ENCODE measurements at regions of chr4 and their contacts with region 1.

Region 1: GRCh38 chr4:6986781-6987587 is 56.2 kb upstream of the TADA2B start:
- DNase-seq: peak; percentile 90
- ATAC-seq: peak; percentile 93
- H3K4me3 ChIP-seq: peak overlapping the region; percentile 95
- H3K27ac ChIP-seq: peak overlapping the region; percentile 87
- H3K4me1 ChIP-seq: peaks cover 14% of the 10 kb centered on the region
- H3K27me3 ChIP-seq: no peaks in the 10 kb centered on the region
- CTCF ChIP-seq: 0 out of 2 replicates have a peak, but pooled peaks have one; percentile 4
- POLR2A ChIP-seq: no peak; the same call in 1 of the 2 replicates
- RAD21 ChIP-seq: no peak

Region 2: GRCh38 chr4:6192245-6192644 is 794.7 kb before region 1 on chr4:
- CTCF ChIA-PET with region 1: no interaction called
- POLR2A ChIA-PET with region 1: no interaction called
- dilution Hi-C with region 1: no loop called
- in situ Hi-C with region 1: no loop called
- intact Hi-C with region 1: no loop called
- DNase-seq: no peak
- ATAC-seq: no peak
- H3K4me3 ChIP-seq: no peak overlapping the region
- H3K27ac ChIP-seq: no peak overlapping the region
- H3K4me1 ChIP-seq: no peaks in the 10 kb centered on the region
- H3K27me3 ChIP-seq: peaks cover 8% of the 10 kb centered on the region; the same call in 1 of the 2 replicates
- CTCF ChIP-seq: no peak
- POLR2A ChIP-seq: no peak
- RAD21 ChIP-seq: no peak

Region 3: DNA sequence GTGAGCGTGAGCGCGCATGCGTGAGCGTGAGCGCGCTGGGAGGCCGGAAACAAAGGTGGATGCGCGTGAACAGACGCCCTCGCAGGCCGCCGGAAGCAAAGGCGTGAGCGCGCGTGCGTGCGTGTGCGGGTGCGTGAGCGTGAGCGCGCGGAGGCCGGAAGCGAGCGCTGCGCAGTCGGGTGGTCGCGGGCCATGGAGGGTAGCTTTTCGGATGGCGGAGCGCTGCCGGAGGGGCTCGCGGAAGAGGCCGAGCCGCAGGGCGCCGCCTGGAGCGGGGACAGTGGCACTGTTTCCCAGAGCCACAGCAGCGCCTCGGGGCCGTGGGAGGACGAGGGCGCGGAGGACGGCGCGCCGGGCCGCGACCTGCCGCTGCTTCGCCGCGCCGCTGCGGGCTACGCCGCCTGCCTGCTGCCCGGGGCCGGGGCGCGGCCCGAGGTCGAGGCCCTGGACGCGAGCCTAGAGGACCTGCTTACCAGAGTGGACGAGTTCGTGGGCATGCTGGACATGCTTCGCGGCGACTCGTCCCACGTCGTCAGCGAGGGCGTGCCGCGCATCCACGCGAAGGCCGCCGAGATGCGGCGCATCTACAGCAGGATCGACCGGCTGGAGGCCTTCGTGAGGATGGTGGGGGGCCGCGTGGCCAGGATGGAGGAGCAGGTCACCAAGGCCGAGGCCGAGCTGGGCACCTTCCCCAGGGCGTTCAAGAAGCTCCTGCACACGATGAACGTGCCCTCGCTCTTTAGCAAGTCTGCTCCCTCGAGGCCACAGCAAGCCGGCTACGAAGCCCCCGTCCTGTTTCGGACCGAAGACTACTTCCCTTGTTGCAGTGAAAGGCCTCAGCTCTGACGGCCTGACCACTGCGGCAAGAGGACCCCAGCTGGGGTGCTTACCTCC is 270.7 kb before region 1 on chr4 and contains the start of gene BLOC1S4:
- CTCF ChIA-PET with region 1: no interaction called
- POLR2A ChIA-PET with region 1: no interaction called
- dilution Hi-C with region 1: no loop called
- in situ Hi-C with region 1: no loop called
- intact Hi-C with region 1: loop called (anchors 5 kb)
- DNase-seq: peak; percentile 92
- ATAC-seq: peak; percentile 83
- H3K4me3 ChIP-seq: peak within 1 kb of the TSS; percentile 87
- H3K27ac ChIP-seq: peak within 1 kb of the TSS; percentile 88
- H3K4me1 ChIP-seq: no peaks in the 10 kb centered on the region
- H3K27me3 ChIP-seq: no peaks in the 10 kb centered on the region
- CTCF ChIP-seq: 0 out of 2 replicates have a peak, but pooled peaks have one; percentile 14
- POLR2A ChIP-seq: peak; percentile 66; the same call in 1 of the 2 replicates
- RAD21 ChIP-seq: no peak
- total RNA-seq, gene BLOC1S4: 8.8 and 13.3 TPM in 2 replicates

Region 4: DNA sequence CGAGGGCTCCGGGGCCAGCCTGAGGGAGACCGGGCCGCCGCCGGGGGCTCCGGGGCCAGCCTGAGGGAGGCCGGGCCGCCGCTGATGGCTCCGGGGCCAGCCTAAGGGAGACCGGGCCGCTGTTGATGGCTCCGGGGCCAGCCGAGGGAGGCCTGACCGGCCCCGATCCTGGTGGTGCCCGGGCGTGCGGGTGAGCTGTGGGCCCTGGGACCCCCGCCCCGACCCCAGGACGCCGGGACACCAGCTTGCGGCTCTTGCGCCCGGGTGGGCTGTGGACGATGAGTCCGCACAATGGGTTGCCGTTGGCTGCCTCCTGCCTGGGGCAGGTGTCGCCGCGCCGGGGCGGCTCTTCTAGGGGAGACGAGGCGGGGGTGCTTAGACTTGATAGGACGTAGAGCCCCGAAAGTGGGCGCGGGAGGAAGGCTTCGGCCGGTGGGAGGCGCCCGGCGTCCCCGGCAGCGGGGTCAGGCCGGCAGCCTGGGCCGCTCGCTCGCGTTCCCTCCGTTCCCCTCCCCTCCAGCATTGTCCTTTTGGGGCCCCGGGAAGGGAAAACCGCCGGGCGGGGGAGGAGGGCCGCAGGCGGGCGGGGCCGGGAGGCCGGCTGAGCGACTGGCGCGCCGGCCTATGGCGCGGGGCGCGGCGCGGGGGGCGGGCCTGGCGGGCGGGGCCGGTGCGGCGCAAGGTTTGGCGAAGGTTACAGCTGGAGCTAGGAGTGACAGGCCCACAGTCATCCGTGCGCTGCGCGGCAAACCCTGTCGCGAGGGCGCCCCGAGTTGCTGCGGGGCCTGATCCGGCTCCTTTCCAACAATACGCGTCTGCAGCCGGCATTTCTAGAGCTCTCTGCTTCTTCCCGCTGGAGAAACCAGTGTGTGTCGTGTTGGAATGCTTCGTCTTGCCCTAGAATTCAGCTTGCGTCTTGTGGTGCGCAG is 203.7 kb before region 1 on chr4:
- CTCF ChIA-PET with region 1: no interaction called
- POLR2A ChIA-PET with region 1: no interaction called
- dilution Hi-C with region 1: no loop called
- in situ Hi-C with region 1: no loop called
- intact Hi-C with region 1: loop called (anchors 10 kb)
- DNase-seq: peak; percentile 79
- ATAC-seq: peak; percentile 83
- H3K4me3 ChIP-seq: peak overlapping the region; percentile 78
- H3K27ac ChIP-seq: peak overlapping the region; percentile 89
- H3K4me1 ChIP-seq: peaks cover 7% of the 10 kb centered on the region
- H3K27me3 ChIP-seq: peaks cover 2% of the 10 kb centered on the region
- CTCF ChIP-seq: peak; percentile 29
- POLR2A ChIP-seq: peak; percentile 77; the same call in 1 of the 2 replicates
- RAD21 ChIP-seq: 0 out of 2 replicates have a peak, but pooled peaks have one; percentile 24

Region 5: GRCh38 chr4:6892190-6892908 is 94.6 kb before region 1 on chr4:
- CTCF ChIA-PET with region 1: interaction called, 5 read pairs
- POLR2A ChIA-PET with region 1: no interaction called
- dilution Hi-C with region 1: no loop called
- in situ Hi-C with region 1: no loop called
- intact Hi-C with region 1: loop called (anchors 5 kb)
- DNase-seq: peak; percentile 79
- ATAC-seq: peak; percentile 49
- H3K4me3 ChIP-seq: no peak overlapping the region
- H3K27ac ChIP-seq: peak overlapping the region; percentile 99; the same call in 1 of the 2 replicates
- H3K4me1 ChIP-seq: peaks cover 22% of the 10 kb centered on the region
- H3K27me3 ChIP-seq: no peaks in the 10 kb centered on the region
- CTCF ChIP-seq: peak; percentile 31; the same call in 1 of the 2 replicates
- POLR2A ChIP-seq: no peak
- RAD21 ChIP-seq: peak; percentile 29; the same call in 1 of the 2 replicates

Region 6: GRCh38 chr4:6909073-6909965 is 77.7 kb before region 1 on chr4 and contains the start of gene TBC1D14:
- CTCF ChIA-PET with region 1: no interaction called
- POLR2A ChIA-PET with region 1: interaction called, 3 read pairs
- dilution Hi-C with region 1: no loop called
- in situ Hi-C with region 1: no loop called
- intact Hi-C with region 1: loop called (anchors 2 kb)
- DNase-seq: peak; percentile 81
- ATAC-seq: peak; percentile 96
- H3K4me3 ChIP-seq: peak within 1 kb of the TSS; percentile 81
- H3K27ac ChIP-seq: peak within 1 kb of the TSS; percentile 81
- H3K4me1 ChIP-seq: peaks cover 9% of the 10 kb centered on the region
- H3K27me3 ChIP-seq: no peaks in the 10 kb centered on the region
- CTCF ChIP-seq: peak; percentile 14; the same call in 1 of the 2 replicates
- POLR2A ChIP-seq: peak; percentile 90
- RAD21 ChIP-seq: no peak
- total RNA-seq, gene TBC1D14: 40.7 and 48.9 TPM in 2 replicates

Region 7: DNA sequence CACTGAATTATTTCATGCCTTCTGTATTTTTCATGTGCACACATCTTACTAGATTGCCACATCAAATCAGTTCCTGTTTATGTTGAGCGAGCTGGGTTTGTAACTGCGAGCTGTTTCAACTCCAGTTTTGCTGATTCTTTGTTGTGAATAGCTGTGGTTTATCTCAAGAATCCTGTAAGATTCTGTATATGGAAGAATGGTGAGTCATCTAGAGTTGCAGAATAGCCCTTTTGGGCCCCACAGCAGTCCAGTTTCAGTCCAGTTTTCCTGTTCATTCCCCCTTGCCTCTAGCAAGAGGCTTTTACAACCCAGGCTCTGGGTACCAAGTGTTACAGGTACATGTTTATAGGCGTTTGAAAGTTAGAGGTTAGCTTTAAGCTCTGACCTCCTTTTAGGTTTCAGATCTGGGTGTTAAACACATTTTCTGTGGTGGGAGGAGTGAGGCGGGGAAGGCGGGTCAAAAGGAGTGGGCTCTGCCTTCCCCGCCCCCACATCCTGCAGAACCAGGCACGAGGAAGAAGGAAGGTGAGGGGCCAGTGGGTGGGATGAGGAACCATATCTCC is 44.7 kb before region 1 on chr4:
- CTCF ChIA-PET with region 1: no interaction called
- POLR2A ChIA-PET with region 1: no interaction called
- dilution Hi-C with region 1: no loop called
- in situ Hi-C with region 1: no loop called
- intact Hi-C with region 1: loop called (anchors 1 kb)
- DNase-seq: peak; percentile 98
- ATAC-seq: peak; percentile 93
- H3K4me3 ChIP-seq: peak overlapping the region; percentile 17; the same call in 1 of the 2 replicates
- H3K27ac ChIP-seq: peak overlapping the region; percentile 90
- H3K4me1 ChIP-seq: peaks cover 28% of the 10 kb centered on the region
- H3K27me3 ChIP-seq: no peaks in the 10 kb centered on the region
- CTCF ChIP-seq: no peak
- POLR2A ChIP-seq: no peak
- RAD21 ChIP-seq: peak; percentile 26

Region 8: DNA sequence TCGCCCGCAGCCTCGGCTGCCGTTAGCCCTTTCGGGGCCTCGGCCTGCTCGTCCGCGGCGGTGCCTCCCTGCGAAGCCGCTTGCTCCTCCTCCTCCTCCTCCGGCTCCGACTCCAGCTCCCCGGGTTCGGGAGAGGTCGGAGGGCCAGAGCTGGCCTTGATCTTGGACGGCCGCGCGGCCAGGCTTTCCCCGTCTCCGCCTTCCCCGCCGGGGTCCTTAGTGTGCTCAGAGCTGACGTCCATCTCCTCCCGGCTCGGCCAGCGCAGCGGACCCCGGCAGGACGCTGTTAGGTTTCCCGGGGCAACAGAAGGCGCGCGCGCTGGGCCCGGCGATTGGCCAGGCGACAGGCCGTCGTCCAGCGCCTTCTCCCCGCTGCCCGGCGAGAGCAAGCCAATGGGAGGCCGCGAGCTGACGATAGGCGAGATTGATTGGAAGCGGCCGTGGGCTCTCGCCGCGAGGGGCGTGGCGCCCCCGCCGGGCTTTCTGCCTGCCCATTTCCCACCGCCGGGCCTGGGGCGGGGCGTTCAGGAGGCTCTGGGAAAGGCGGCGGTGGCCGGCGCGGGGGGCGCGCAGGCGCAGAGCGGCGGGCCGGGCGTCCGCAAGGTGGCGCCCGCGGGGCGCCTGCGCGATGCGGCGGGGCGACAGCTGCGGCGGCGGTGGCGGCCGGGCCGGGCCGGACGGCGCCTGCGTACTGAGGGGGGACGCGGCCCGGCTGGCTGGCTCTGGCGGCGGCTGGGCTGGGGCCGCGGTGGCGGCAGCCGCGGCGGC is 55.9 kb after region 1 on chr4 and contains the start of gene TADA2B:
- CTCF ChIA-PET with region 1: no interaction called
- POLR2A ChIA-PET with region 1: no interaction called
- dilution Hi-C with region 1: no loop called
- in situ Hi-C with region 1: no loop called
- intact Hi-C with region 1: loop called (anchors 5 kb)
- DNase-seq: peak; percentile 97
- ATAC-seq: peak; percentile 89
- H3K4me3 ChIP-seq: peak within 1 kb of the TSS; percentile 79
- H3K27ac ChIP-seq: peak within 1 kb of the TSS; percentile 74
- H3K4me1 ChIP-seq: peaks cover 21% of the 10 kb centered on the region
- H3K27me3 ChIP-seq: no peaks in the 10 kb centered on the region
- CTCF ChIP-seq: peak; percentile 65
- POLR2A ChIP-seq: peak; percentile 67
- RAD21 ChIP-seq: peak; percentile 37; the same call in 1 of the 2 replicates
- total RNA-seq, gene TADA2B: 6.1 and 8.1 TPM in 2 replicates